ENCODE measurements at regions of chr17 and their contacts with region 1.

Region 1: DNA sequence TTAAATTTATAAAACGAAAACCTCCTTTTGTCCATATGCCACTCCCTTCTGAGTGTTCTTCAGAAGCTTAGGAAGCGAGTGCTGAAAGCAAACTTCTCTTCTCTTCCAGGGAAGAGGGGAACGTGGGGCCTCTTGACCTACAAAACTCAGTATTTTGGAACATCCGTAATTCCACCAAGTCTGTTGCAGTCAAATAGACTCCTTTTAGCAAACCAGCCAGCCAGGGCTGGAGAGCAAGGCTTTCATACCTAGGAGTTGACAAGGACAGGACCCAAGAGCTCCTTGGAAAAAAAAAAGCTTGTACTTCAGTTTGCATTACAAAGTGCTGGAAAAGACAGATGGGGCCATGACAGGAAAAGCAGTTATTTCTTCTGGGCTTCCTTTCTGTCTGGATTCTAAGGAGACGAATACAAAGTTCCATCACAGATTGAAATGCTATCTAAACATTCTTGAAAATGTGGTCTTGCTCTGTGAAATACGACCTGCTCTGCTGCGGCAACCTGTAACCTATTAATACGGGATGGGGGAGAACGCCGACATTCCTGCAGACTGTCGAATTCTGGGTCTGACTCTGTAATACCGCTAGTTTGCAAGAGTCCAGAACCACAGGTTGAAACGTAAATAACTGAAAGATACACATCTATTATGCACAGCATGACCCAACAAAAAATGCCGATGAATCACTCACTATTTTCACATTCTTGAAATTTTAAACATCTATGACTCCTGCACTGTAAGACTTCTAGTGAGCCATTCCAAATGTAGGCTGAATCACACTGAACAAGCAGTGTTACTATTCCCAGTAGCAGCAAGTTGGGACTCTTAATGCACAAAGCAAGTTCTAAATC is 20.6 kb downstream of the VPS53 start:
- H3K4me3 Mint-ChIP-seq: no peak overlapping the region
- H3K27ac Mint-ChIP-seq: no peak overlapping the region
- H3K4me1 Mint-ChIP-seq: peaks cover 47% of the 10 kb centered on the region
- H3K27me3 Mint-ChIP-seq: no peaks in the 10 kb centered on the region

Region 2: GRCh38 chr17:393806-394717 is 300.0 kb before region 1 on chr17:
- intact Hi-C with region 1: loop called (anchors 10 kb)
- H3K4me3 Mint-ChIP-seq: peak overlapping the region; percentile 49
- H3K27ac Mint-ChIP-seq: peak overlapping the region; percentile 80
- H3K4me1 Mint-ChIP-seq: peaks cover 24% of the 10 kb centered on the region
- H3K27me3 Mint-ChIP-seq: peaks cover 6% of the 10 kb centered on the region

Region 3: GRCh38 chr17:614653-615473 is 79.2 kb before region 1 on chr17:
- intact Hi-C with region 1: no loop called
- H3K4me3 Mint-ChIP-seq: peak overlapping the region; percentile 2
- H3K27ac Mint-ChIP-seq: peak overlapping the region; percentile 59
- H3K4me1 Mint-ChIP-seq: peaks cover 33% of the 10 kb centered on the region
- H3K27me3 Mint-ChIP-seq: no peaks in the 10 kb centered on the region

Region 4: DNA sequence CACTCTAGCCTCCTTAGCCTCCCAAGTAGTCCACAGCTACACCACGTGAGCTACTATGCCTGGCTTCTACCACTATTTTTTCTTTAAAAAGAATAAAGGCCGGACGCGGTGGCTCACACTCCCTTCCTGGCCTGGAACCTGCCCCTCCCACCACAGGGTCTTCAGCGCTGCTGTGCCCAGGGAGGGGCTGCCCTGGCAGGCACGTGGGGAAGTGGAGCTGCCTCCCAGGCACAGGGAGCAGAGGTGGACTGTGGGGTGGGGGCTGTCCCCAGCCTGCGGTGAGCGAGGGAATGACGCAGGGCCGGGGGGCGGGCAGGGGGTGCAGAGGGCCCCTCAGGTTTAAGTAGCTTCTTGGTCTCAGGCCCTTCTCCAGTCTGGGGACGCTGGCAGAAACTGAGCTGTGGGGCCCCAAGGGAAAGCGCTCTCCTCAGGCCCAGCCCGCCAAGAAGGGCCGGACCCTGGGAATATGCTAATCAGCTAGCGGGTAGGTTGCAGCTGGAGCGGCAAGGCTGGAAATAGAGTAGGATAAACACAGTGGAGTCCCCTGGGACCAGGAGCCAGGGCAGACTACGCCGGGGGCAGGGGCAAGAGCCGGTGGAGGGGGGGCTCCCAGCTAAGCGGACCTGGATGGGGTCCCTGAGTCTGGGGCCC is 349.7 kb after region 1 on chr17:
- intact Hi-C with region 1: no loop called
- H3K4me3 Mint-ChIP-seq: no peak overlapping the region
- H3K27ac Mint-ChIP-seq: no peak overlapping the region
- H3K4me1 Mint-ChIP-seq: peaks cover 57% of the 10 kb centered on the region
- H3K27me3 Mint-ChIP-seq: no peaks in the 10 kb centered on the region

Measured in dendritic cell treated with granulocyte-macrophage colony-stimulating factor and Interleukin-4, amounts not matched to agents 40 ng/mL and 50 ng/mL, for 4 days (primary cell).